HCT116 (cell line): ENCODE measurements at regions of chr16 and their contacts with region 1.

Region 1: GRCh38 chr16:70395345-70395901 is 43.5 kb downstream of the ST3GAL2 start:
- DNase-seq: no peak
- ATAC-seq: peak; percentile 92
- H3K4me3 ChIP-seq: no peak overlapping the region
- H3K27ac ChIP-seq: no peak overlapping the region
- H3K4me1 ChIP-seq: peaks cover 0 to 29% of the 10 kb centered on the region in 2 experiments; a peak in 3 of 4 replicates
- H3K27me3 ChIP-seq: no peaks in the 10 kb centered on the region
- CTCF ChIP-seq: peak; percentile 80 to 93 (median 91)
- POLR2A ChIP-seq: no peak
- RAD21 ChIP-seq: peak; percentile 94

Region 2: DNA sequence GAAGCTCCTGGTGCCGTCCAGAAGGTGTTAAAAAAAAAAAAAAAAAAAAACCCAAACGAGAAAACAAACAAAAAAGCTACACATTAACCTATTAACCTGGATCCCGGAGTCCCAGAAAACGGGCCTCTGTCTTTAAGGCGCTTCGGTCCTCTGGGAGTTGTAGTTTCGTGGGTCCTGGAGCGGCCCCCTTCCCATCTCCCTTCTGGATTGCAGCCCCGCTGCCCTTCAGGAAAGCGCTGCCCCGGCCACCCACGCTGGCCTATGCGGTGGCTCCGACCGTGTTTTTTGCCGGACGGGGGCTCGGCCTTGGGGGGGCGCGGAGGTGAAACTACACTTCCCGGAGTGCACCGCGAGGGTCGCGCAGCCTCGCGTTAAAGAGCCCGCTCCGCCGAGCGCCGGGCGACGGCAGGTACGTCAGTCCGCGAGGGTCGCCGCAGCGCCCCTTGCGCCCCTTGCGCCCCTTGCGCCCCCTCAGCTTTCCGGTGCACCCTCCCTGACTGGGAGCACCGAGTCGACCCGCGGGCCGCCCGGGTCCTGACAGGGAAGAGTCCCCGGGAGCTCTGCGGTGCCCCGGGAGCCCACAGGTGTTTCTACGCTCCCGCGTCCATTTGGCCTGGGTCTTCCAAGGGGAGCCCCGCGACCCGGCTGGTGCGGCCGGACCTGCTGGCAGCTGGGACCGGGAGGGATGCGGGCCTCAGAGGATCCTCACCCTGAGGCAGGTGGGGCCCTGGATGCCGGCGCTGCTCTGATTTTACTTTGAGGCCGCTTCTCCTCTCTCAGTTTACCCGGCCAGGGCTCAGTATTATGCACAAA is 59.0 kb after region 1 on chr16 and contains the start of gene FCSK:
- CTCF ChIA-PET with region 1: no interaction called
- POLR2A ChIA-PET with region 1: no interaction called
- RAD21 ChIA-PET with region 1: no interaction called
- intact Hi-C with region 1: loop called (anchors 1 kb)
- DNase-seq: peak; percentile 50
- ATAC-seq: peak; percentile 87
- H3K4me3 ChIP-seq: peak within 1 kb of the TSS; percentile 90 to 92
- H3K27ac ChIP-seq: peak within 1 kb of the TSS; percentile 96
- H3K4me1 ChIP-seq: peaks cover 3 to 20% of the 10 kb centered on the region in 2 experiments; a peak in 2 of 4 replicates
- H3K27me3 ChIP-seq: no peaks in the 10 kb centered on the region
- CTCF ChIP-seq: no peak
- POLR2A ChIP-seq: no peak
- RAD21 ChIP-seq: peak; percentile 27; the same call in 1 of the 2 replicates
- total RNA-seq, gene FCSK: 17.1 TPM